ENCODE measurements at regions of chr10 and their contacts with region 1.

Region 1: GRCh38 chr10:102917962-102918816 is at the start of gene CNNM2:
- DNase-seq: peak; percentile 100
- H3K4me3 Mint-ChIP-seq: peak within 1 kb of the TSS; percentile 92
- H3K27ac Mint-ChIP-seq: peak within 1 kb of the TSS; percentile 88
- H3K4me1 Mint-ChIP-seq: peaks cover 49% of the 10 kb centered on the region
- H3K27me3 Mint-ChIP-seq: peaks cover 5% of the 10 kb centered on the region
- total RNA-seq, gene CNNM2: 3.9 to 4.3 TPM

Region 2: GRCh38 chr10:102713814-102714620 is 204.2 kb before region 1 on chr10 and contains the start of gene ARL3:
- CTCF ChIA-PET with region 1: no interaction called
- intact Hi-C with region 1: loop called (anchors 1 kb)
- DNase-seq: peak; percentile 98
- H3K4me3 Mint-ChIP-seq: peak within 1 kb of the TSS; percentile 92
- H3K27ac Mint-ChIP-seq: peak within 1 kb of the TSS; percentile 79
- H3K4me1 Mint-ChIP-seq: peaks cover 44% of the 10 kb centered on the region
- H3K27me3 Mint-ChIP-seq: no peaks in the 10 kb centered on the region
- total RNA-seq, gene ARL3: 3.9 TPM

Region 3: DNA sequence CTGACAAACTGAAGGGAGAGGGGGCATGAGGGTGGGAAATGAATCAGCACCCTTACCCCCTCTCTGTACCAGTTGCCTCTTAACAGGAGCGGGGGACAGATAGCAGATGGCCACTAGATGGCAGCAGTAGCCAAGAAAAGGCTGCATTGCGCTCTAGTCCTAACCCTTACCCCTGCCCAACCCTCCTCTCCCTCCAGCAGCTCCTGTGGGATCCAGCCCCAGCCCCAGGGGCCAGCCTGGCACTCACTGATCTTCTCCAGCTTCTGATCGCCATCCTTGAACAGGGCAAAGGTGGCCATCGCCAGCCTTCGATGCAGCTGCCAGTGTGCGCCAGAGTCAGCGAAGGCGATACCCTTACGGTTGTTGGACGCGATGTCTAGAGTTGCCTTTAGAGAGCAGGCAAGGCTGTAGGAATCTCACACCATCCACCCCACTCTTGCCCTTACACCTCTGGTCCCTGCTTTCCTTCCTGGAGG is 83.1 kb before region 1 on chr10:
- CTCF ChIA-PET with region 1: interaction called, 6 read pairs
- intact Hi-C with region 1: loop called (anchors 1 kb)
- DNase-seq: peak; percentile 85
- H3K4me3 Mint-ChIP-seq: no peak overlapping the region
- H3K27ac Mint-ChIP-seq: no peak overlapping the region
- H3K4me1 Mint-ChIP-seq: no peaks in the 10 kb centered on the region
- H3K27me3 Mint-ChIP-seq: peaks cover 3% of the 10 kb centered on the region

Region 4: DNA sequence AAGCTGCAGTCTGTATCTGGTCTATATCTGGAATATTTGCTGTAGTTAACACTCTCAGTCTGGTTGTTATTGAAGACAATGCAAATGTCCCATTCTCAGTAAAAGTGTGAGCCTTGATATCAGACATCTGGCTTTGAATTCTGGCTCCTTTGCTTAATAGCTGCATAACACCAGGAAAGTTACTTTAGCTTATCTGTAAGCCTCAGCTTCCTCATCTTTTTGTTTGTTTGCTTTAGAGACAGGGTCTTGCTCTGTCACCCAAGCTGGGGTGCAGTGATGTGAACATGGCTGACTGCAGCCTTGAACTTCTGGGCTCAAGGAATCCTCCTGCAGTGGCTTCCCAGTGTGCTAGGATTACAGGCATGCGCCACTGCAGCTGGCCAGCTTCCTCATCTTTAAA is 41.2 kb after region 1 on chr10:
- CTCF ChIA-PET with region 1: no interaction called
- intact Hi-C with region 1: no loop called
- DNase-seq: no peak
- H3K4me3 Mint-ChIP-seq: no peak overlapping the region
- H3K27ac Mint-ChIP-seq: no peak overlapping the region
- H3K4me1 Mint-ChIP-seq: no peaks in the 10 kb centered on the region
- H3K27me3 Mint-ChIP-seq: no peaks in the 10 kb centered on the region

Region 5: DNA sequence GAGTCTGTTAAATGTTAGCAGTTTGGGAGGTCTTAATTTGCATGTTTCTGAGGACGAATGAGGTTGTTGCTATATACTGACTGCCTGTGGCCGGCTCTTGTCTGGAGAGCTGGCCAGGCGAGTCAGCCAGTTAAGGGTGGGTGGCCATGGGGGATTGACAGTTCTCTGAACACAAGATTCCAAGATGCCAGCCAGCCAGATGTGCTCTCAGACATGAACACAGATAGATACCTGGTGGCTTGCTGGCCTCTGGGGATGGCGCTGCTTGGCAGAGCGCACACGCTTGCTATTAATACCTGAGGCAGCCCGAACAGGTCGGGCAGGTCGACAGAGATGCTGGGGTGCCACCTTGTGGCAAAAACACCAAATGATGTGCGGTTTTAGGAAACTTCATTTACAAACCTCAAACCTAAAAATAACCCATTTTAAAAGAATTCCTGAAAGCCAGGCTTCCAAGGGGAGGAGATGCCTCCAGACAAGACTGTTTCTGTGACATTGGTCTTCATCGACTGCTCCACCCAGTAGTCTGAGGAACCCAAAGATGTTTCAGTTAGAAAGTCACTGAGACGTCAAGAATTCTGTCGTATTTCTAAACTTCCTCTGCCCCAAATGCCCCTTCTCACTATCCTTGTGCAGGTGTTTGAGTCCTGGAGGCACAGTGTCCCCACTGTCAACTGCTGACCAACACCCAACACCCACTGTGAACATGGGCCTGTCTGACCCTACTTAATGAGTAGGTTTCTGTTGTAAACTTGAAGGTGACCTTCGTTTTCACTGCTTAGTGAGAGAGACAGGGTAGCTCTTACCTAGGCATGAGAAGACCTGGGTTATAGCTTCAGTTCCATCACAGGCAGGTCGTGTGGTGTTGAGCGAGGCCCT is 151.5 kb after region 1 on chr10:
- CTCF ChIA-PET with region 1: interaction called, 98 read pairs
- intact Hi-C with region 1: loop called (anchors 1 kb)
- DNase-seq: peak; percentile 83
- H3K4me3 Mint-ChIP-seq: no peak overlapping the region
- H3K27ac Mint-ChIP-seq: no peak overlapping the region
- H3K4me1 Mint-ChIP-seq: peaks cover 17% of the 10 kb centered on the region
- H3K27me3 Mint-ChIP-seq: no peaks in the 10 kb centered on the region

Region 6: GRCh38 chr10:103244663-103245271 is 326.6 kb after region 1 on chr10:
- CTCF ChIA-PET with region 1: interaction called, 28 read pairs
- intact Hi-C with region 1: loop called (anchors 1 kb)
- DNase-seq: peak; percentile 83
- H3K4me3 Mint-ChIP-seq: no peak overlapping the region
- H3K27ac Mint-ChIP-seq: no peak overlapping the region
- H3K4me1 Mint-ChIP-seq: peaks cover 17% of the 10 kb centered on the region
- H3K27me3 Mint-ChIP-seq: no peaks in the 10 kb centered on the region

Region 7: GRCh38 chr10:103367782-103368518 is 449.8 kb after region 1 on chr10 and contains the start of gene TAF5:
- CTCF ChIA-PET with region 1: no interaction called
- intact Hi-C with region 1: loop called (anchors 1 kb)
- DNase-seq: peak; percentile 95
- H3K4me3 Mint-ChIP-seq: peak within 1 kb of the TSS; percentile 85
- H3K27ac Mint-ChIP-seq: peak within 1 kb of the TSS; percentile 87
- H3K4me1 Mint-ChIP-seq: peaks cover 18% of the 10 kb centered on the region
- H3K27me3 Mint-ChIP-seq: no peaks in the 10 kb centered on the region
- total RNA-seq, gene TAF5: 16.3 TPM